ENCODE measurements at regions of chr7 and their contacts with region 1.

Region 1: DNA sequence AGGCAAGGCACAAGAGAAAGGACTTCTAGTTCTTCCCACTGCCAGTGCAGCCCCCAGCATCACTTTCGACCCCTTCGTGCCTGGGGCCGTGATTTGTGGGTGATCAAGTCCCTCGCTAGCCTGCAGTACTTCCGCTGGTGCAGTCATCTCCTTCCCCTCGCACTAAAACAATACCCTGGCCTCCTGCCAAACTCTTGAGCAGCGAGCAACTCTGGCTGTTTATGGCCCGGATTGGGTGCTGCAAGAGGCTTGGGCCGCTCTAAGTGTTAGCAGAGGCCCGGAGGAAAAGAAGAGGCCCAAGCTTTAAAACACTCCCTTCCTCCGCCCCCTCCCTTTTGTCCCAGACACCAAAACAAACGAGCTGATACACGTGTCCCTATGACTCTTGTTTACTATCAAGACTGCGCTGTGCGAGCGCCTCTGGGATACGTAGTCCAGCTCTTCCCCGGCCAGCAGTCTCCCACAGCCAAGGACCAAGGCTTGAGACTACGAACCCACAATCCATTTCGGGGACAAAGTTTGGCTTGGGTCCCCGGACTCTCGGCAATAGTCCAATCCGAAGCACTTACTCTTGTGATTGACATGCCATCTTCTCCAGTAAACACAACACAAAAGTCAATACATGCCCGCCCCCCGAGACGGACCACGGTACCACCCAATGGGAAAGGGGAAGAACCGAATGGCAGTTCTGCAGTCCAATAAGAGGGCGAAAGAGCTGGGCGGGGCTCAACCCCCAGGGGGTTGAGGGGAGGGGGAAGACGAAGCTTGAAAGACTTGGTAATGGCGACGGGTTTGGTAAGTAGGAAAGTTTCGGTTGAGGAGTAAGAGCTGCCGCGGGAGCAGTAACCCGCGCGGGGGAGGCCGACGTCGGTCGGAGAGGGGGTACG is at the start of gene HBP1:
- DNase-seq: peak; percentile 84
- ATAC-seq: peak; percentile 80
- H3K4me3 Mint-ChIP-seq: peak within 1 kb of the TSS; percentile 99
- H3K27ac Mint-ChIP-seq: peak within 1 kb of the TSS; percentile 99
- H3K4me1 Mint-ChIP-seq: peaks cover 45% of the 10 kb centered on the region
- H3K27me3 Mint-ChIP-seq: peaks cover 6% of the 10 kb centered on the region
- CTCF ChIP-seq: no peak
- total RNA-seq, gene HBP1: 53.6 and 59.9 TPM in 2 replicates

Region 2: GRCh38 chr7:105531792-105532671 is 1636.4 kb before region 1 on chr7 and contains the start of gene RINT1:
- CTCF ChIA-PET with region 1: no interaction called
- POLR2A ChIA-PET with region 1: interaction called, 4 read pairs
- intact Hi-C with region 1: loop called (anchors 5 kb)
- DNase-seq: peak; percentile 90
- ATAC-seq: peak; percentile 92
- H3K4me3 Mint-ChIP-seq: peak within 1 kb of the TSS; percentile 91
- H3K27ac Mint-ChIP-seq: peak within 1 kb of the TSS; percentile 96
- H3K4me1 Mint-ChIP-seq: peaks cover 33% of the 10 kb centered on the region
- H3K27me3 Mint-ChIP-seq: no peaks in the 10 kb centered on the region
- CTCF ChIP-seq: no peak
- total RNA-seq, gene RINT1: 31.1 and 35.5 TPM in 2 replicates

Region 3: GRCh38 chr7:106425017-106425719 is 743.3 kb before region 1 on chr7:
- CTCF ChIA-PET with region 1: no interaction called
- POLR2A ChIA-PET with region 1: no interaction called
- intact Hi-C with region 1: loop called (anchors 2 kb)
- DNase-seq: peak; percentile 36
- ATAC-seq: peak; percentile 90
- H3K4me3 Mint-ChIP-seq: peak overlapping the region; percentile 72
- H3K27ac Mint-ChIP-seq: peak overlapping the region; percentile 94
- H3K4me1 Mint-ChIP-seq: peaks cover 34% of the 10 kb centered on the region
- H3K27me3 Mint-ChIP-seq: no peaks in the 10 kb centered on the region
- CTCF ChIP-seq: no peak

Region 4: GRCh38 chr7:106514881-106515280 is 653.6 kb before region 1 on chr7:
- CTCF ChIA-PET with region 1: no interaction called
- POLR2A ChIA-PET with region 1: no interaction called
- intact Hi-C with region 1: no loop called
- DNase-seq: no peak
- ATAC-seq: no peak
- H3K4me3 Mint-ChIP-seq: no peak overlapping the region
- H3K27ac Mint-ChIP-seq: no peak overlapping the region
- H3K4me1 Mint-ChIP-seq: no peaks in the 10 kb centered on the region
- H3K27me3 Mint-ChIP-seq: peaks cover 27% of the 10 kb centered on the region
- CTCF ChIP-seq: no peak

Region 5: GRCh38 chr7:106717955-106718871 is 450.3 kb before region 1 on chr7:
- CTCF ChIA-PET with region 1: no interaction called
- POLR2A ChIA-PET with region 1: interaction called, 4 read pairs
- intact Hi-C with region 1: loop called (anchors 1 kb)
- DNase-seq: no peak
- ATAC-seq: peak; percentile 88
- H3K4me3 Mint-ChIP-seq: no peak overlapping the region
- H3K27ac Mint-ChIP-seq: no peak overlapping the region
- H3K4me1 Mint-ChIP-seq: peaks cover 12% of the 10 kb centered on the region
- H3K27me3 Mint-ChIP-seq: no peaks in the 10 kb centered on the region
- CTCF ChIP-seq: no peak

Region 6: GRCh38 chr7:106870983-106871410 is 297.5 kb before region 1 on chr7:
- CTCF ChIA-PET with region 1: interaction called, 3 read pairs
- POLR2A ChIA-PET with region 1: interaction called, 27 read pairs
- intact Hi-C with region 1: no loop called
- DNase-seq: no peak
- ATAC-seq: peak; percentile 77
- H3K4me3 Mint-ChIP-seq: peak overlapping the region; percentile 74
- H3K27ac Mint-ChIP-seq: peak overlapping the region; percentile 86
- H3K4me1 Mint-ChIP-seq: peaks cover 77% of the 10 kb centered on the region
- H3K27me3 Mint-ChIP-seq: no peaks in the 10 kb centered on the region
- CTCF ChIP-seq: no peak

Region 7: DNA sequence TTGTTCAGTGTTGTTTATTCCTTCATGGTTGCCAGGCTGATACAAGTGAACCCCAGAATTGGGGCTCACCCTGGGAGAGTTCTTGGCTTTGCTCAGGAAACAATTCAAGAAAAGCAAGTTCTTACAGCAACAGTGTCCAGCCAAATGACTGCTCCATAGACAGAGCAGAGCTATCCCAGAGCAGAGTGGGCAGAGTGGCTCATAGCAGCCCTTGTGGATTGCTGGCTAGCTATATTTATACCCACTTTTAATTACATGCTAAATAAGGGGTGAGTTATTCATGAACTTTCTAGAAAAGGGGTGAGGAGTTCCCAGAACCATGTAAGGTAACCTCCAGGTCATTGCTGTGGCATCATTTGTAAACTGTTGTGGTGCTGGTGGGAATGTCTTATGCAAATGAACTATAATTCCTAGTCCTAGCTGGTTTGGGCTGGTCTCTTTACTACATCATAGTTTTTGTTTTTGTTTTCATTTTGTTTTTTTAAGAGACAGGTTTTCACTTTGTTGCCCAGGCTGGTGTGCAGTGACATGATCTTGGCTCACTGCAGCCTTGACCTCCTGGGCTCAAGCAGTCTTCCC is 59.6 kb before region 1 on chr7:
- CTCF ChIA-PET with region 1: no interaction called
- POLR2A ChIA-PET with region 1: no interaction called
- intact Hi-C with region 1: no loop called
- DNase-seq: no peak
- ATAC-seq: no peak
- H3K4me3 Mint-ChIP-seq: no peak overlapping the region
- H3K27ac Mint-ChIP-seq: no peak overlapping the region
- H3K4me1 Mint-ChIP-seq: no peaks in the 10 kb centered on the region
- H3K27me3 Mint-ChIP-seq: no peaks in the 10 kb centered on the region
- CTCF ChIP-seq: no peak

Region 8: GRCh38 chr7:107180378-107180777 is 11.9 kb after region 1 on chr7:
- CTCF ChIA-PET with region 1: no interaction called
- POLR2A ChIA-PET with region 1: interaction called, 52 read pairs
- intact Hi-C with region 1: loop called (anchors 1 kb)
- DNase-seq: no peak
- ATAC-seq: peak; percentile 84
- H3K4me3 Mint-ChIP-seq: peak overlapping the region; percentile 33
- H3K27ac Mint-ChIP-seq: peak overlapping the region; percentile 71
- H3K4me1 Mint-ChIP-seq: peaks cover 33% of the 10 kb centered on the region
- H3K27me3 Mint-ChIP-seq: no peaks in the 10 kb centered on the region
- CTCF ChIP-seq: no peak

Region 9: GRCh38 chr7:107890962-107891635 is 722.6 kb after region 1 on chr7 and contains the start of gene DLD:
- CTCF ChIA-PET with region 1: no interaction called
- POLR2A ChIA-PET with region 1: no interaction called
- intact Hi-C with region 1: loop called (anchors 1 kb)
- DNase-seq: peak; percentile 89
- ATAC-seq: peak; percentile 97
- H3K4me3 Mint-ChIP-seq: peak within 1 kb of the TSS; percentile 98
- H3K27ac Mint-ChIP-seq: peak within 1 kb of the TSS; percentile 96
- H3K4me1 Mint-ChIP-seq: peaks cover 45% of the 10 kb centered on the region
- H3K27me3 Mint-ChIP-seq: no peaks in the 10 kb centered on the region
- CTCF ChIP-seq: no peak
- total RNA-seq, gene DLD: 55.0 and 66.1 TPM in 2 replicates

Measured in activated B cell treated with CpG ODN at 0.5 μM for 24 hours (primary cell).